IMR-90 (cell line): ENCODE measurements at regions of chr11 and their contacts with region 1.

Region 1: GRCh38 chr11:100575870-100576705 is 111.0 kb upstream of the ARHGAP42 start:
- DNase-seq: peak; percentile 73
- ATAC-seq: peak; percentile 79
- H3K4me3 ChIP-seq: no peak overlapping the region
- H3K27ac ChIP-seq: no peak overlapping the region
- H3K4me1 ChIP-seq: peaks cover 4% of the 10 kb centered on the region
- H3K27me3 ChIP-seq: no peaks in the 10 kb centered on the region
- CTCF ChIP-seq: peak; percentile 93
- POLR2A ChIP-seq: no peak
- RAD21 ChIP-seq: peak; percentile 98

Region 2: GRCh38 chr11:99015634-99016454 is 1560.2 kb before region 1 on chr11:
- CTCF ChIA-PET with region 1: no interaction called
- POLR2A ChIA-PET with region 1: no interaction called
- dilution Hi-C with region 1: no loop called
- in situ Hi-C with region 1: no loop called
- intact Hi-C with region 1: loop called (anchors 5 kb)
- DNase-seq: peak; percentile 51
- ATAC-seq: peak; percentile 78
- H3K4me3 ChIP-seq: no peak overlapping the region
- H3K27ac ChIP-seq: no peak overlapping the region
- H3K4me1 ChIP-seq: no peaks in the 10 kb centered on the region; the same call in 1 of the 2 replicates
- H3K27me3 ChIP-seq: peaks cover 7% of the 10 kb centered on the region
- CTCF ChIP-seq: peak; percentile 84
- POLR2A ChIP-seq: no peak
- RAD21 ChIP-seq: peak; percentile 83

Region 3: GRCh38 chr11:99739464-99740089 is 836.5 kb before region 1 on chr11:
- CTCF ChIA-PET with region 1: interaction called, 4 read pairs
- POLR2A ChIA-PET with region 1: no interaction called
- dilution Hi-C with region 1: no loop called
- in situ Hi-C with region 1: no loop called
- intact Hi-C with region 1: loop called (anchors 5 kb)
- DNase-seq: peak; percentile 40
- ATAC-seq: peak; percentile 64; the same call in 1 of the 2 replicates
- H3K4me3 ChIP-seq: no peak overlapping the region
- H3K27ac ChIP-seq: no peak overlapping the region
- H3K4me1 ChIP-seq: no peaks in the 10 kb centered on the region
- H3K27me3 ChIP-seq: no peaks in the 10 kb centered on the region
- CTCF ChIP-seq: peak; percentile 76
- POLR2A ChIP-seq: no peak
- RAD21 ChIP-seq: peak; percentile 83

Region 4: GRCh38 chr11:100682247-100682969 is 106.3 kb after region 1 on chr11:
- CTCF ChIA-PET with region 1: interaction called, 5 read pairs
- POLR2A ChIA-PET with region 1: no interaction called
- dilution Hi-C with region 1: no loop called
- in situ Hi-C with region 1: no loop called
- intact Hi-C with region 1: loop called (anchors 1 kb)
- DNase-seq: peak; percentile 46
- ATAC-seq: no peak
- H3K4me3 ChIP-seq: no peak overlapping the region
- H3K27ac ChIP-seq: no peak overlapping the region
- H3K4me1 ChIP-seq: peaks cover 2% of the 10 kb centered on the region; the same call in 1 of the 2 replicates
- H3K27me3 ChIP-seq: no peaks in the 10 kb centered on the region
- CTCF ChIP-seq: peak; percentile 62
- POLR2A ChIP-seq: no peak
- RAD21 ChIP-seq: peak; percentile 64

Region 5: GRCh38 chr11:100855466-100856067 is 279.5 kb after region 1 on chr11:
- CTCF ChIA-PET with region 1: interaction called, 3 read pairs
- POLR2A ChIA-PET with region 1: no interaction called
- dilution Hi-C with region 1: no loop called
- in situ Hi-C with region 1: loop called (anchors 5 kb)
- intact Hi-C with region 1: loop called (anchors 1 kb)
- DNase-seq: peak; percentile 68
- ATAC-seq: peak; percentile 54
- H3K4me3 ChIP-seq: no peak overlapping the region
- H3K27ac ChIP-seq: no peak overlapping the region
- H3K4me1 ChIP-seq: peaks cover 2% of the 10 kb centered on the region
- H3K27me3 ChIP-seq: no peaks in the 10 kb centered on the region
- CTCF ChIP-seq: peak; percentile 71
- POLR2A ChIP-seq: no peak
- RAD21 ChIP-seq: peak; percentile 71

Region 6: GRCh38 chr11:101127699-101128570 is 551.8 kb after region 1 on chr11:
- CTCF ChIA-PET with region 1: no interaction called
- POLR2A ChIA-PET with region 1: no interaction called
- dilution Hi-C with region 1: no loop called
- in situ Hi-C with region 1: no loop called
- intact Hi-C with region 1: loop called (anchors 10 kb)
- DNase-seq: no peak
- ATAC-seq: peak; percentile 38
- H3K4me3 ChIP-seq: peak overlapping the region; percentile 41
- H3K27ac ChIP-seq: no peak overlapping the region
- H3K4me1 ChIP-seq: peaks cover 4% of the 10 kb centered on the region; the same call in 1 of the 2 replicates
- H3K27me3 ChIP-seq: peaks cover 41% of the 10 kb centered on the region
- CTCF ChIP-seq: no peak
- POLR2A ChIP-seq: no peak
- RAD21 ChIP-seq: no peak